ENCODE measurements at regions of chr13 and their contacts with region 1.

Region 1: DNA sequence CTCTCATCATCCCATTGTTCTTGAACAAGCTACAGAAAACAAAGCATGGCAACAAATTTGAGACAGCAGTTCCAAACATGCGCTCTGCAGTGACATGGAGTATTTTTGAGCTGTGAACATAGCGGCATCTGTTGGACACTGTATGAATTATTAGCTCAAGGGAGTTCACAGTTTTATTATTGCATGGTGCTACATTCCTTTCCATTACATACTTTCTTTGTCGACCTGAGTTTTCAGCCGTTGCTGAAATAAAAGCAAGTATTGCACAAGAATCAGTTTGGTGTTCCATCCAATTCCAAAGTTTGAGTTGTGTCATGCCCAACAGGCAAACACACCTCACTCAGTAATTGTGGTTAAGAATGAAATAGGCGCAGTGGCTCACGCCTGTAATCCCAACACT is 30.1 kb upstream of the METTL21C start:
- DNase-seq: no peak
- H3K4me3 ChIP-seq: no peak overlapping the region
- H3K27ac ChIP-seq: peak overlapping the region in 10 of 59 donors; percentile 10 to 55 (median 32)
- H3K27me3 ChIP-seq: no peaks in the 10 kb centered on the region
- CTCF ChIP-seq: peak in 55 of 56 donors; percentile 35 to 78 (median 56)

Region 2: DNA sequence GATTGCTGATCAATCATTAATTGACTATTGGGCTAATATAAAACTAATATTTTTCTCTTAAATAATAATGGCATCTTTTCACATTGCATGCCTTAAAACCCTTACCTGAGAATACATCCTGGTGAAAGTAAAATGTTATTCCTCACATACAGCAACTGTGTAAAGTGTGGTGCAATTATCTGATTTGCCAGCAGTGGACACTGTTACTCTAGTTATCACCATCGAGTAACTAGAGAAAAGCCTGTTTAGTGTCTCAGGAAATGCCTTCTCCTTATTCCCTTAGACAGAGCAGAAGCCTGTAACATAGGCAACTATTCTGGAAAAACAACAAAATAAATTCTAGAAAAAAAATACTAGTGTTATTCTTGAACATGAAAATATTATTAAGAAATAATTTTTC is 782.9 kb before region 1 on chr13:
- intact Hi-C with region 1: loop called in 1 of 2 experiments (anchors 5 kb)
- DNase-seq: peak in 2 of 10 donors; percentile 49 to 53
- H3K4me3 ChIP-seq: no peak overlapping the region
- H3K27ac ChIP-seq: no peak overlapping the region
- H3K27me3 ChIP-seq: no peaks in the 10 kb centered on the region
- CTCF ChIP-seq: peak; percentile 27 to 86 (median 69)

Region 3: DNA sequence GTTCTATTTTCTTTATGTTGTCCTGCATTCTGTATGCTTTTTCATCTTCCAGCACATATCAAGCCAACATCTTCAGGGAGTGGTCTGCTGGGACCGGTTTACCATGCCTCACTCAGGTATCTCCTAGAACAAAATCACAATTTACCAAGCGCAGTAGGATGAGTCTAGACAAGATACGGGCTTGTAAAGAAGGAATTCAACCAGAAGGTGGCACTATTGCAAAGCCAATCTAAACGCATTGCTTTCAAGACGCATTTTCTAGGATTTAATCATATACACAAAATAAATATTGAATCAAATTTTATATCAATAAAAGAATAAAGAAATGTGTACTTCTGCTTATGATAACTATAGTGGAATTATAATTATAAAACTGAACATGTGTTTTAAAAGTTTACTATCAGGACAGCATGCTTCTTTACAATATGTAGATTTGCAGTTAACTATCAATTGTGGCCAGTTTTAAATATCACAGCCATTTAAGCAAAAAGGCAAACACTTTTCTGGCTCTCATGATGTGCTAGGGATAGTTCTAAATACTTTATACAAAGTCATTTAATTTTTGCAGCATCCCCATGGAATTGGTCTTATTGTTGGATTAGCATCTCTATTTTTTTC is 144.3 kb before region 1 on chr13:
- intact Hi-C with region 1: loop called (anchors 2 to 5 kb)
- DNase-seq: peak in 2 of 10 donors; percentile 33 to 42
- H3K4me3 ChIP-seq: no peak overlapping the region
- H3K27ac ChIP-seq: no peak overlapping the region
- H3K27me3 ChIP-seq: no peaks in the 10 kb centered on the region
- CTCF ChIP-seq: peak; percentile 68 to 94 (median 82)

Region 4: GRCh38 chr13:102596147-102597028 is 128.5 kb before region 1 on chr13 and contains the start of gene TPP2:
- intact Hi-C with region 1: loop called (anchors 2 kb)
- DNase-seq: peak; percentile 98 to 99 (median 99)
- H3K4me3 ChIP-seq: peak within 1 kb of the TSS; percentile 74 to 100 (median 95)
- H3K27ac ChIP-seq: peak within 1 kb of the TSS; percentile 87 to 99 (median 97)
- H3K27me3 ChIP-seq: no peaks in the 10 kb centered on the region
- CTCF ChIP-seq: peak in 16 of 56 donors; percentile 2 to 51 (median 30)
- total RNA-seq, gene TPP2: 21.8 to 51.2 (median 39.7) TPM

Region 5: DNA sequence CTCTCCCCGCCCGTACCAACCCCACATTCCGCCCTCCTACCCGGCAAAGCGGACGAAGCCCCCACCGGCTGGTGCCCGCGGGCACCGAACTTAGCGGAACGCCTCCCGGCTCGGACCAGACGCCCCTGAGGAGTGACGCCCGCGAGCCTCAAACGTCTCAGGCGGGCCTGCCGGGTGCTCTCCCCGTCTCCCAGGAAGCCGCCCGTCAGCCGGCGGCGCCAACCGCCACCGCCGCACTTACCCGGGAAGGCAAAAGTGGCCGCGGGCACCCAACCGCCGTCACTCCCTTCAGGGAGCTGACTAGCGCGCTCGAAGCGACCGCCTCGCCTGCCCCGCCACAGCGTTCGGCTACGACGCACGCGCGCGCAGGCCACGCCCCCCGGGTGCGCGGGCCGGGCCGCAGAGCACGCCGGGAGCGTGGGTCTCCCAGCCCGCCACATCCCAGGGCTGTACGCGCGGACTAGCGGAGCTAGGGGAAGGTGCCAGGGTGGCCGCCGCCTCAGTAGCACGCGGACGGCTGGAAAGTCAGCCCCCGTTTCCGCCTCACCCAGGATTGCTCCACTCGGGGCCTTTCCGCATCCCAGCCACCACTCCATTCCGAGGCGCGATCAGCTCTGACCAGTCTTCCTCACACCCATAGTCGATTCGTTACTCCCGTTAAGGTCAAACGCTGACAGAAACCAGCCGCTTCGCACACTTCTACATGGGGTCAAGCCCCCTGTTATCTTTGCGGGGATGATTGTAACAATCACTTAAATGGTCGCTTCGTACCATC is 48.7 kb after region 1 on chr13 and contains the start of gene TEX30:
- intact Hi-C with region 1: loop called (anchors 5 to 10 kb)
- DNase-seq: peak; percentile 53 to 93 (median 73)
- H3K4me3 ChIP-seq: peak within 1 kb of the TSS; percentile 59 to 97 (median 86)
- H3K27ac ChIP-seq: peak within 1 kb of the TSS in 57 of 59 donors; percentile 9 to 91 (median 80)
- H3K27me3 ChIP-seq: no peaks in the 10 kb centered on the region
- CTCF ChIP-seq: peak in 43 of 56 donors; percentile 6 to 60 (median 35)
- total RNA-seq, gene TEX30: 3.7 to 14.8 (median 8.6) TPM

Region 6: GRCh38 chr13:103203735-103204330 is 478.9 kb after region 1 on chr13:
- intact Hi-C with region 1: no loop called
- DNase-seq: no peak
- H3K4me3 ChIP-seq: no peak overlapping the region
- H3K27ac ChIP-seq: peak overlapping the region in 1 of 59 donors; percentile 61
- H3K27me3 ChIP-seq: peaks cover 0 to 5% (median 0%) of the 10 kb centered on the region in 45 donors
- CTCF ChIP-seq: no peak